SK-N-SH (cell line): ENCODE measurements at regions of chr11 and their contacts with region 1.

Region 1: DNA sequence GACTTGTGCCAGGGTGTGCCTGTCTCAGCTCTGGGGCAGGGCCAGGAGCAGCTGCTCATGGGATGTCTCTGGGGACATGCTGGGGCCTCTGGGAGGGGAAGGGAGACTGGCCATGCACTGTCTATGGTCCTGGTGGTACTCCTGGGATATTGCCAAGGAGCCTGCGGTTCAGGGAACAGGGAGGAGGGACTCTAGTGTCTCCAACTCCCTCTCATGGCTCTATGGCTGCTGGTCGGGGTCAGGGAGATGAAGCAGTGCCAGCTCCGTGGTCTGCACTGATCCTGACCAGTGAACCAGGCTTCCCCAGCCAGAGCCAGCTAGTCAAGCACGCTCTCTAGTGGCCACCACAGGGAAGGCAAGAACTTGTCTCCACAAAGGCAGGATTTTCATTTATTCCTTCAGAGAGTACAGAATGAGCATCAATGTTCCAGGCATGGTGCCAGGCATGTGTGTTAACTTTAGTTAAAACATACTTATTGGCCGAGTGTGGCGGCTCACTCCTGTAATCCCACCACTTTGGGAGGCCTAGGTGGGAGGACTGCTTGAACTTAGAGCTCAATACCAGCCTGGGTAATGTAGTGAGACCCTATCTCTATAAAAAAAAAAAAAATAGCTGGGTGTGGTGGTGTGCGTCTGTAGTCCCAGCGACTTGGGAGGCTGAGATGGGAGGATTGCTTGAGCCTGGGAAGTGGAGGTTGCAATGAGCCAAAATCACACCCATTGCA is 2.5 kb upstream of the BEST1 start:
- DNase-seq: peak; percentile 87
- H3K4me3 ChIP-seq: no peak overlapping the region
- H3K27ac ChIP-seq: no peak overlapping the region; a peak in 1 of 4 replicates
- H3K4me1 ChIP-seq: peaks cover 11 to 18% of the 10 kb centered on the region in 2 experiments; a peak in 2 of 4 replicates
- H3K27me3 ChIP-seq: no peaks in the 10 kb centered on the region
- CTCF ChIP-seq: peak; percentile 95
- EP300 ChIP-seq: no peak
- RAD21 ChIP-seq: peak; percentile 100

Region 2: DNA sequence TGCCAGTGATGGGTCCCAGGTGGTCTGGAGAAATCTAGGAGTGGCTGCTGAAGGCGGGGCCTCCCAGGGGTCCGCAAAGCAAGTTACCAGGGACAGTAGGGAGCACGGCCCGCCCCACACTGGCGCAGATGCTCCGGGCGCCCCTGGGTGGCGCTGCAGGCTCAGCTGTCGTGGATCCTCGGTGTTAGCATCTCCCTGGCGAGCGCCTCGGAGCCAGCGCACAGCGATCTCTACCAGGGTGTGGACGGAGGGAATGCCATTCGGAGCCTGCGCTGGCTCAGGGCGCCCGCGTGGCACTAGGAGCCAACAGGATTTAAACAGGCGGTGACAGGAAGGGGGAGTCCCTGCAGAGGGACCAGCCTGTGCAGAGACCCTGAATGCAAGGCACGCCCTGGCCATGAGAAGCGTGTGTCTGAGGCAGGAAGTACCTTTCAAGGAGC is 76.5 kb before region 1 on chr11:
- CTCF ChIA-PET with region 1: interaction called, 29 read pairs
- POLR2A ChIA-PET with region 1: interaction called, 3 read pairs
- DNase-seq: peak; percentile 94
- H3K4me3 ChIP-seq: peak overlapping the region; percentile 12 to 17; a peak in 2 of 4 replicates
- H3K27ac ChIP-seq: no peak overlapping the region
- H3K4me1 ChIP-seq: peaks cover 0 to 13% of the 10 kb centered on the region in 2 experiments; a peak in 2 of 4 replicates
- H3K27me3 ChIP-seq: no peaks in the 10 kb centered on the region
- CTCF ChIP-seq: peak; percentile 89
- EP300 ChIP-seq: no peak
- RAD21 ChIP-seq: peak; percentile 88

Region 3: DNA sequence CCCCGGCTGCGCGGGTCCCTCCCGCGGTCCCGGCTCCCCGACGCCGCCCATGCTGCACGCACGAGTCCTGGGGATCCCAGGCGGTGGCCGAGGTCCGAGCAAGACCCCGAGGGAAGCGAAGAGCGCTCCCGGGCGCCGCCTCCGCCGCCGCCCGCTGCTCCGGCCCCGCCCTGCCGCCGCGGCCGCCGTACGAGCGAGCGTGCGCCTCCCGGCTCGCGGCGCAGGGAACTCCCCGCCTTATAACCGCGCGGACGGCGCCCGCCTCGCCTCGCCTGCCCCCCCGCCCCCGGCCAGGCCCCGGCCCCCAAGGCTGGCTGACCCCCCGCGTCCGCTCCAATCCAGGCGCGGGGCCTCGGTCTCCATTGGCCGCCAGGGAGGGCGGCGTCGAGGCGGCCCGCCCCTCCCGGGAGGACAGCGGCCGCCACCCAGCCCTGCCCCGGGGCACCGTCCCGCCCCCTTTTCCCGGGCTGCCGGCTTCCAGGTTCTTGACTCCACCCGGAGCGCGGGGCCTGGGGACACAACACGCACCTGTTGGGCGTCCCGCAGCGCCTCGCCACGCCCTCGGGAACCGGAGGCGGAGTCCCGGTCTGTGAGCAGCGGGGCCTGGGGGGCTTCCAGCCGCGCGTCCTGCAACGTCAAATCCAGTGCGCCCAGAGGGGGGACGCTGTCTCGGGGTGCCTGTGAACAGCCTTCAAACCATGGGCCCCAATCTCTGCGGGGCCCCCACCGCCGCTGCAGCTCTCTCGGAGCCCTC is 56.1 kb before region 1 on chr11 and contains the start of gene FADS3:
- CTCF ChIA-PET with region 1: interaction called, 543 read pairs
- POLR2A ChIA-PET with region 1: interaction called, 5 read pairs
- DNase-seq: peak; percentile 96
- H3K4me3 ChIP-seq: peak within 1 kb of the TSS; percentile 77 to 81
- H3K27ac ChIP-seq: peak within 1 kb of the TSS; percentile 24 to 31; a peak in 2 of 4 replicates
- H3K4me1 ChIP-seq: peaks cover 7 to 14% of the 10 kb centered on the region in 2 experiments; a peak in 3 of 4 replicates
- H3K27me3 ChIP-seq: no peaks in the 10 kb centered on the region
- CTCF ChIP-seq: no peak
- EP300 ChIP-seq: no peak
- RAD21 ChIP-seq: no peak
- polyA plus RNA-seq, gene FADS3: 93.3 and 116 TPM in 2 replicates

Region 4: GRCh38 chr11:61923166-61924063 is 24.2 kb before region 1 on chr11:
- CTCF ChIA-PET with region 1: interaction called, 61 read pairs
- POLR2A ChIA-PET with region 1: interaction called, 8 read pairs
- DNase-seq: peak; percentile 61
- H3K4me3 ChIP-seq: no peak overlapping the region
- H3K27ac ChIP-seq: peak overlapping the region; percentile 49 to 93; a peak in 2 of 4 replicates
- H3K4me1 ChIP-seq: peaks cover 20 to 34% of the 10 kb centered on the region in 2 experiments
- H3K27me3 ChIP-seq: no peaks in the 10 kb centered on the region
- CTCF ChIP-seq: no peak
- EP300 ChIP-seq: no peak
- RAD21 ChIP-seq: no peak

Region 5: DNA sequence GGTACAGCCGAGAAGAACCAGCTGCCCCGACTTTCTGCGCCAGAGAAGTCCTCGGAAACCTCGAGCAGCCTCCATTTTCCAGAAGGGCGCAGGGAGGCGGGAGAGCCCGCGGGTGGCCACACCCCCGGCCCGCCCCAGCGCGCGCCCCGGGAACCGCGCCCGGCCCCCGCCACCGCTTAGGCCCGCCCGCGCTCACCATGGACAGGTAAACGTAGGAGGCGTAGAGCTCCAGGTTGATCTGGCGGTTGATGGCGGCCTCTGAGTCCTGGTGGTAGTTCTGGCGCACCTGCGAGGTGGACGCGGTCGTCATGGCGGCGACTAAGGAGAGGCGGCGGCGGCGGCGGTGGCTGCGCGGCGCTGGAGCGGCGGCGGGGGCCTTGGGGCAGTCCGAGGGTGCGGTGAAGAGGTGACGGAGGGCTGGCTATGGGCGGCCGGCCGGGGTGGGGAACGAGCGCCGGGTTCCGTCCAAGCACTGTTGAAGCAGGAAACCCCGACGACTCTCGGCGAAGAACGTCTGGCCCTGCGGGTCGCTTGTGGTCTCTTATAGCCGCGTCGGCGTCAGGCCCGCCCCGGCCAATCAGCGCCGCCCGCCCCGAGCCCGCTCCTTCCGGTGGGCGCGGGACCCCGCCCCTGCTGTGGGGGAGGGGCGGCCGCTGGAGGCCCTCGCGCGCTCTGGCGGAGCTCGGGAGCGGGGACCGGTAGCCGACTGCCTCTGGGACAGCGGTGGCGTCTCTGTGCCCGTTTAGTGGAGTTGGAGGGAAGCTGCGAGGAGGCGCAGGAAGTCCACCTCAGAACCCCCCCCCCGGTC is 19.7 kb after region 1 on chr11 and contains the start of gene FTH1:
- CTCF ChIA-PET with region 1: interaction called, 64 read pairs
- POLR2A ChIA-PET with region 1: interaction called, 76 read pairs
- DNase-seq: peak; percentile 99
- H3K4me3 ChIP-seq: peak within 1 kb of the TSS; percentile 99
- H3K27ac ChIP-seq: peak within 1 kb of the TSS; percentile 94 to 97
- H3K4me1 ChIP-seq: peaks cover 43 to 52% of the 10 kb centered on the region in 2 experiments
- H3K27me3 ChIP-seq: no peaks in the 10 kb centered on the region
- CTCF ChIP-seq: no peak
- EP300 ChIP-seq: peak; percentile 8 to 29; a peak in 2 of 4 replicates
- RAD21 ChIP-seq: no peak
- polyA plus RNA-seq, gene FTH1: 879 and 1,229 TPM in 2 replicates